Mammary epithelial cell (primary cell): ENCODE measurements at regions of chr16 and their contacts with region 1.

Region 1: DNA sequence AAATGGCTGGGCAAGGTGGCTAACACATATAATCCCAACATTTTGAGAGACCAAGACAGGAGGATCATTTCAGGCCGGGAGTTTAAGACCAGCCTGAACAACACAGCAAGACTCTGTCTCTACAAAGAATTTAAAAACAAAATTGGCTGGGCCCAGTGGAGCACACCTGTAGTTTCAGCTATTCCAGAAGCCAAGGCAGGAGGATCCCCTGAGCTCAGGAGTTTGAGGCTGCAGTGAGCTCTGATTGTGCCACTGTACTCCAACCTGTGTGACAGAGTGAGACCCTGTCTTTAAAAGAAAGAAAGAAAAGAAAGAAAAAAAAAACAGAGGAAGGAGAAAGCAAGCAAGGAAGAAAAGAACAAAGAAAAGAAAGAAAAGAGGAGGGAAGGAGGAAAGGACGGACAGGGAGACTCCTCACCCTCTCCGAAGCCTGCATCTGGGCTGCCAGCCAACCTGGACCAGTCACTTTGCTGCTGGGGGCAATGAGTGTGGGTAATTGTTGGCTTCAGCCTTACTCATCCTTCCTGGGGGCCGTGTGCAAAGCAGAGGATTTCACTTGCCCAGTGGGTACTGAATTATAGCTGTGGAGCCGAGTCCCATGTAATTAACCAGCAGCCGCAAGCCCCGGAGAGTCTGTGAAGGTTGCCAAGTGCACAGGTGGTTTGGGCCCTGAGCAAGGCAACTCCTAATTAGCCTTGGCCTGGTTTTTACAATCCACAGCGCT is 6.7 kb upstream of the MT4 start:
- DNase-seq: peak; percentile 92
- H3K4me3 ChIP-seq: no peak overlapping the region
- H3K27ac ChIP-seq: no peak overlapping the region
- H3K4me1 ChIP-seq: peaks cover 21% of the 10 kb centered on the region
- H3K27me3 ChIP-seq: no peaks in the 10 kb centered on the region
- CTCF ChIP-seq: no peak

Region 2: GRCh38 chr16:55760310-55761001 is 797.7 kb before region 1 on chr16:
- CTCF ChIA-PET with region 1: no interaction called
- dilution Hi-C with region 1: no loop called
- in situ Hi-C with region 1: no loop called
- intact Hi-C with region 1: no loop called
- DNase-seq: no peak
- H3K4me3 ChIP-seq: no peak overlapping the region
- H3K27ac ChIP-seq: no peak overlapping the region
- H3K4me1 ChIP-seq: no peaks in the 10 kb centered on the region
- H3K27me3 ChIP-seq: no peaks in the 10 kb centered on the region
- CTCF ChIP-seq: no peak

Region 3: DNA sequence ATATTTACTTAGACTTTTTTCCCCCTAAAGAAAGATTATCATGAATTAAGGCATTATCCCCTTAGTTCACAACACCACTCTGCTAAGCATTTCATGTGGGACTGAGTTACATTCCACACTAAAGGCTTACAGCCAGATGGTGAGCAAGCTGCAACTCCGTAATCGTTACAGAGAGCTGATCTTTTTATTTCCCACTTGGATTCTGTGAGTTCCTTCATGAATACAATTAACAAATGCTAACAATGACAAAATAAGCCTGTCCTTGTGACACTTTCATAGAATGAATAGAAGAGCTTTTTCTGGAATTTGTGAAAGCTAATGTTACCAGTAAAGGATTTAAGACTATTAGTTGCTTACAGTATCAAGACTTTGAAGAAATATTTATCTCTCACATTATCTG is 98.1 kb before region 1 on chr16:
- CTCF ChIA-PET with region 1: no interaction called
- dilution Hi-C with region 1: no loop called
- in situ Hi-C with region 1: no loop called
- intact Hi-C with region 1: no loop called
- DNase-seq: no peak
- H3K4me3 ChIP-seq: no peak overlapping the region
- H3K27ac ChIP-seq: no peak overlapping the region
- H3K4me1 ChIP-seq: no peaks in the 10 kb centered on the region
- H3K27me3 ChIP-seq: no peaks in the 10 kb centered on the region
- CTCF ChIP-seq: no peak

Region 4: GRCh38 chr16:56532714-56533113 is 25.5 kb before region 1 on chr16:
- CTCF ChIA-PET with region 1: interaction called, 12 read pairs
- dilution Hi-C with region 1: no loop called
- in situ Hi-C with region 1: no loop called
- intact Hi-C with region 1: no loop called
- DNase-seq: no peak
- H3K4me3 ChIP-seq: no peak overlapping the region
- H3K27ac ChIP-seq: no peak overlapping the region
- H3K4me1 ChIP-seq: peaks cover 10% of the 10 kb centered on the region
- H3K27me3 ChIP-seq: no peaks in the 10 kb centered on the region
- CTCF ChIP-seq: peak in 1 of 2 donors; percentile 11

Region 5: GRCh38 chr16:56583351-56584168 is 25.4 kb after region 1 on chr16:
- CTCF ChIA-PET with region 1: no interaction called
- dilution Hi-C with region 1: no loop called
- in situ Hi-C with region 1: no loop called
- intact Hi-C with region 1: no loop called
- DNase-seq: no peak
- H3K4me3 ChIP-seq: no peak overlapping the region
- H3K27ac ChIP-seq: no peak overlapping the region
- H3K4me1 ChIP-seq: no peaks in the 10 kb centered on the region
- H3K27me3 ChIP-seq: peaks cover 2% of the 10 kb centered on the region
- CTCF ChIP-seq: no peak

Region 6: DNA sequence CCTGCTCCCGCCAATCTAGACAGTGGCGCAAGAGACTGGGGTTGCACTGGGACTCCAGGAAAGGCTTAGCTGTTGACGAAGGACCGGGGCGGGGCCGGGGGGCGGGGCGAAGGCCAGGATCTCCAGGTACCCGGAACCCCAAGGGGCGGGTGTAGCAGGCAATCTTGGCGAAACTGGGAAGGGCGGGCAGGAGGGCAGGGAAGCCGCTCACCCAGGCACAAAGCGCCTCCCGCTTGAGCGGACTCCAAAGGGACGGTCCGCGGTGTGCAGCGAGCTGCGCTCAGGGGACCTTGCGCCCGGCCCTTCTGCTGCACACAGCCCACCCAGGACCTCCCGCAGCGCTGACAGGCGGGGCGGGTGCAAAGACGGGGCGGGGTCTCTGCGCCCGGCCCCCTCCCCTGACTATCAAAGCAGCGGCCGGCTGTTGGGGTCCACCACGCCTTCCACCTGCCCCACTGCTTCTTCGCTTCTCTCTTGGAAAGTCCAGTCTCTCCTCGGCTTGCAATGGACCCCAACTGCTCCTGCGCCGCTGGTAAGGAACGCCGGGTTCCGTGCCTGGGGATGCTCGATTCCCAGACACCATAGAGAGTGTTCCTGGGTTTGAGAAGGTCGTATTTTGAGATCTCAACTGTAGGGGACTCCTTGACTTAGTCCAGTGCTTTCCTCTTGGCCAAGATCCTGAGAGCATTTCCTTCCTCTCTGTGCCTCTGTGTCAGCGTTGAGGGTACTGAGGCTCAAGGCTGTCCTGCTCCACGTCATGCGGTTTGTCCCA is 99.6 kb after region 1 on chr16 and contains the start of gene MT1F:
- CTCF ChIA-PET with region 1: no interaction called
- dilution Hi-C with region 1: no loop called
- in situ Hi-C with region 1: no loop called
- intact Hi-C with region 1: no loop called
- DNase-seq: peak; percentile 89
- H3K4me3 ChIP-seq: peak within 1 kb of the TSS; percentile 44 to 69 (median 65)
- H3K27ac ChIP-seq: peak within 1 kb of the TSS; percentile 6
- H3K4me1 ChIP-seq: peaks cover 17% of the 10 kb centered on the region
- H3K27me3 ChIP-seq: no peaks in the 10 kb centered on the region
- CTCF ChIP-seq: no peak
- total RNA-seq, gene MT1F: 4.2 to 8.6 TPM